Psoas muscle (tissue), 8 donors: ENCODE measurements at regions of chr1 and their contacts with region 1.

Region 1: DNA sequence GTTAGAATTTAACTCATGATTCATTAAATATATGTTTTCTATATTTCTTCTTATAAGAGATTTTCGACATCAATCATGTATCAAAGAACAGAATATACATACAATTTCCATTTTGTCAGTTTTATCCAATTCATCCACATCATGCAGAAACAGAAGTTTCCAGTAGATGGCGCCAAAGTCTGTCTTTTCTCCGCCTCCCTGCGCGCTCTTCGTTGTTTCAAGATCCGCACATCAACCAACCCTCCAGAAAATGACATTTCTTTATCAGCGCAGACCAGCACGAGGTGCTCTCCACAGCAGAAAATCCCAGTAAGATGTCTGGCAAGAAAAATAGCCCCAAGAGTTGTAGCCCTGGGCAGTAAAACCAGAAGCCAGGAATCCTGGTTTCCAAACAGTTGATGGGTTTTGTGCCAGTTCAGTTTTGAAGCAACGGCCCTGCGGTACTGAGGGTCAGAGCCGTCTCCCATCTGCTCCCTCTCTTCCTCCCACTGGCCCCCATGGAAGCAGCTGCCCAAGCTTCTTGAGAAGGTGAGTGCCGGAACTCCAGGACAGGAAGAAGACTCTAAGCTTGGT is 38.6 kb upstream of the GPR137B start:
- DNase-seq: no peak
- ATAC-seq: peak in 1 of 4 donors; percentile 71
- H3K4me3 ChIP-seq: no peak overlapping the region
- H3K27ac ChIP-seq: no peak overlapping the region
- H3K4me1 ChIP-seq: no peaks in the 10 kb centered on the region
- H3K27me3 ChIP-seq: peaks cover 0 to 14% (median 0%) of the 10 kb centered on the region in 3 donors
- CTCF ChIP-seq: peak; percentile 82

Region 2: GRCh38 chr1:235725434-235725833 is 378.3 kb before region 1 on chr1:
- intact Hi-C with region 1: no loop called
- DNase-seq: no peak
- ATAC-seq: no peak
- H3K4me3 ChIP-seq: no peak overlapping the region
- H3K27ac ChIP-seq: no peak overlapping the region
- H3K4me1 ChIP-seq: no peaks in the 10 kb centered on the region
- H3K27me3 ChIP-seq: no peaks in the 10 kb centered on the region
- CTCF ChIP-seq: no peak

Region 3: DNA sequence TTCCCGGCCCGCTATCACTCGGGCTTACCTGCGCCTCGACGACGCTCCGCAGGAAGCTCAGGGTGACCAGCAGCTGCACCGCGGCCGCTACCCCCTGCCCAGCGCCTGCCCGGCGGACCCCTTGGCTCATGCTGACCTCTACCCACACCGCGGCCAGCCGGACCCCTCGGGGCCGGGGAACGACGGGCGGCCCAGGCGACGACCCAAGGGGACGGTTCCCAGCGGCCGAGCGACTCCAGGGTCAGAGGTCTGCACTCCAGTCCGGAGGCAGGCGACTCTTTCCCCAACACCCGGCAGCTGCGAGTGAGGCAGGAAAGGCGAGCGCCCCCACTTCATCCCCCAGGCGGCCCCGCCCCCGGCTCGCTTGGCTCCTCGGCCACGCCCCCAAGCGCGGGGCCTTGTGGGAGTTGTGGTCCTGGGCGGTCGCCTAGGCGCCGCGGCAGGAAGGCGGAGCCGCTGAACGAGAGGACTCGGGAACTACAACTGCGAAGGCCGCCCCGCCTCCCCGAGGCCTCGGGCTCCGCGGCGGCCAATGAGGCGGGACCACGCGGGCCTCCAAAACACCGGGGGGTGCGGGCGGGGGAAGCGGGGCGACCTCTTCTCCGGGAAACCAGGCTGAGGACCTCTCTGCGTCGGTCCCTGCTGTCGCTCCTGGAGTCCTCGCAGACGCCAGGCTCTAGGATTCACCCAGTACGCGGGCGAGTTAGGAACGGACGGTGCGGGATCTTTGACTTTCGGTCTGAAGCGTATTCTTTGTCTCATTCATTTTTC is 178.1 kb after region 1 on chr1 and contains the start of gene ERO1B:
- intact Hi-C with region 1: loop called in 1 of 2 experiments (anchors 10 kb)
- DNase-seq: peak; percentile 98
- ATAC-seq: peak; percentile 99 to 100 (median 100)
- H3K4me3 ChIP-seq: peak within 1 kb of the TSS; percentile 84
- H3K27ac ChIP-seq: peak within 1 kb of the TSS; percentile 84
- H3K4me1 ChIP-seq: peaks cover 7% of the 10 kb centered on the region
- H3K27me3 ChIP-seq: peaks cover 0 to 12% (median 0%) of the 10 kb centered on the region in 3 donors
- CTCF ChIP-seq: no peak
- total RNA-seq, gene ERO1B: 2.6 to 6.0 (median 2.6) TPM

Region 4: GRCh38 chr1:236489710-236490377 is 386.1 kb after region 1 on chr1:
- intact Hi-C with region 1: loop called (anchors 2 to 5 kb)
- DNase-seq: no peak
- ATAC-seq: peak in 2 of 4 donors; percentile 39 to 61
- H3K4me3 ChIP-seq: no peak overlapping the region
- H3K27ac ChIP-seq: no peak overlapping the region
- H3K4me1 ChIP-seq: no peaks in the 10 kb centered on the region
- H3K27me3 ChIP-seq: peaks cover 0 to 11% (median 2%) of the 10 kb centered on the region in 3 donors
- CTCF ChIP-seq: peak; percentile 48

Region 5: GRCh38 chr1:236523701-236524141 is 420.0 kb after region 1 on chr1 and contains the start of gene LGALS8:
- intact Hi-C with region 1: loop called in 1 of 2 experiments (anchors 10 kb)
- DNase-seq: peak; percentile 92 to 93
- ATAC-seq: peak; percentile 90 to 93 (median 92)
- H3K4me3 ChIP-seq: peak within 1 kb of the TSS; percentile 85
- H3K27ac ChIP-seq: peak within 1 kb of the TSS; percentile 82
- H3K4me1 ChIP-seq: peaks cover 6% of the 10 kb centered on the region
- H3K27me3 ChIP-seq: no peaks in the 10 kb centered on the region
- CTCF ChIP-seq: no peak
- total RNA-seq, gene LGALS8: 11.1 to 17.8 (median 13.4) TPM

Region 6: GRCh38 chr1:236868625-236869467 is 765.1 kb after region 1 on chr1:
- intact Hi-C with region 1: loop called in 1 of 2 experiments (anchors 10 kb)
- DNase-seq: no peak
- ATAC-seq: peak in 1 of 4 donors; percentile 47
- H3K4me3 ChIP-seq: no peak overlapping the region
- H3K27ac ChIP-seq: no peak overlapping the region
- H3K4me1 ChIP-seq: no peaks in the 10 kb centered on the region
- H3K27me3 ChIP-seq: no peaks in the 10 kb centered on the region
- CTCF ChIP-seq: peak; percentile 86

Region 7: GRCh38 chr1:237562242-237562823 is 1458.6 kb after region 1 on chr1:
- intact Hi-C with region 1: loop called in 1 of 2 experiments (anchors 10 kb)
- DNase-seq: no peak
- ATAC-seq: no peak
- H3K4me3 ChIP-seq: no peak overlapping the region
- H3K27ac ChIP-seq: no peak overlapping the region
- H3K4me1 ChIP-seq: no peaks in the 10 kb centered on the region
- H3K27me3 ChIP-seq: no peaks in the 10 kb centered on the region
- CTCF ChIP-seq: peak; percentile 39